Gastrocnemius medialis (tissue), 4 donors: ENCODE measurements at regions of chr6 and their contacts with region 1.

Region 1: GRCh38 chr6:149648148-149649145 is at the start of gene KATNA1:
- DNase-seq: peak; percentile 78 to 86
- ATAC-seq: peak; percentile 92
- H3K4me3 ChIP-seq: peak within 1 kb of the TSS; percentile 62 to 92 (median 86)
- H3K27ac ChIP-seq: peak within 1 kb of the TSS; percentile 87 to 95 (median 92)
- H3K4me1 ChIP-seq: peaks cover 15 to 18% of the 10 kb centered on the region in 2 donors
- H3K27me3 ChIP-seq: no peaks in the 10 kb centered on the region
- CTCF ChIP-seq: peak in 1 of 5 experiments; percentile 7
- POLR2A ChIP-seq: peak; percentile 89 to 93
- total RNA-seq, gene KATNA1: 16.0 to 29.3 (median 26.0) TPM

Region 2: DNA sequence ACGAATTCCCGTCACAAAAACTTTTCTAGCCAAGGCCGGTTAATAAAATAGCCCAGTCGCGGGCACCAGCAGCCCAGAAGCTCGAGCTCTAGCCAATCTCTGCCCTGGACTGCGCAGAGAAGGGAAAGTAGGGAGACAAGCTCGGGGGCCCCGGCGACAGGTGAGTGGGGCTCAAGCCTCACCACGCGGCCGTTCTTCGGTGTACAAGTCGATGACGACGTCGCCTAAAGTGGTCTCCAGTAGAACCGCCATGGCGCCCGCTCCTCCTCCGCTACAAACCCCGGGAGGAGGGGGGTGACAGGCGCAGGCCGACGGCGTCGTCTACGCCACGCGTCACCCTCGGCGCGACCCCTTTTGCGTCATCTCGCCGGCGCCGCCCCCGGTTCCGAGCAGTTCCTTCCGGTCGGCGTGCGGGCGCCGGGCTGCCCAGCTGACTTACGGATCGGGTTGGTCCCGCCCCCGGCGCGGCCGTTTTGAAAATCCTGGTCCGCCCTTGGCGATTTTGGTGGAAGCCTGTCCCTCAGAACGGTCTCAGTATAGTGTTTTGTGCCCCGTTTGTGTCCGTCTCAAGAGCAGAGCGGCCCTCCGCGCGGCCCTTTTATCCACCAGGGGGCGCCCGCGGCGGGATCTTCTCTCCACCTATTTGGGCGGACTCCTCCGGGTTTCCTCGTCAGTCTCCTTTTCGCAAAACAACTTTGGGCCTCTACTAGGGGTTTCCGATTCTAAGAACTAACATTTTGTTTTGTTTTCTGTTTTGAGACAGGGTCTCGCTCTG is 102.5 kb before region 1 on chr6 and contains the start of gene PPIL4:
- in situ Hi-C with region 1: no loop called
- intact Hi-C with region 1: loop called (anchors 2 kb)
- DNase-seq: peak; percentile 92 to 95
- ATAC-seq: peak; percentile 95 to 96
- H3K4me3 ChIP-seq: peak within 1 kb of the TSS; percentile 79 to 100 (median 97)
- H3K27ac ChIP-seq: peak within 1 kb of the TSS; percentile 87 to 100 (median 98)
- H3K4me1 ChIP-seq: peaks cover 22 to 31% of the 10 kb centered on the region in 2 donors
- H3K27me3 ChIP-seq: no peaks in the 10 kb centered on the region
- CTCF ChIP-seq: peak; percentile 78 to 90 (median 83)
- POLR2A ChIP-seq: peak; percentile 83 to 88
- total RNA-seq, gene PPIL4: 14.9 to 26.2 (median 18.5) TPM

Region 3: DNA sequence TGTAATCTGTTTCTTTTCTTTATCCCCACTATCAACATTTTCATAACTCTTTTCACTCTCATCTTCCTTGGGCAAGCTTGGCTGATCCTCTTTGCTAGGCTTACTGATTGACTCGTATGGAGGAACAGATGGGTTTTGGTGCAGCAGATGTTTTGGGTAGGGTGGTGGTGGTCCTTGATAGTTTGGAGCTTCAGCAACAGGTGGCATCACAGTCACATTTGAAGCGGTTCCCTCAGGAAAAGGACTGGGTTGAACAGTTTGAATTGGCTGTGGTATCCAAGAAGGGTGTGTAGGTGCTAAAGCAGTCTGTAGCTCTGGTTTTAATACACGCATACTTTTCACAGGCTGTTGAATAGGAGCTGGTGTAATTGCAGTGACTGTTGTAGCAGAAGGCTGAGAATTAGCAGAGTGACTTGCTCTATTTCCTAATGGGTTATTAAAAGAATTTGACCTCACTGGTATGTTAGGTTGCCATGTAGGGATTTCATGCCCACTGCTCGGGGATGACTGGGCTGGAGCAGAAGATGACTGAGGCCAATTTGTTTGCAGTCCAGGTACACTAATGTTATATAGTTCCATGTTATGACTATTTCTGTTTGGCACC is 34.9 kb after region 1 on chr6:
- in situ Hi-C with region 1: no loop called
- intact Hi-C with region 1: loop called (anchors 2 kb)
- DNase-seq: peak; percentile 6 to 66
- ATAC-seq: peak; percentile 95 to 99
- H3K4me3 ChIP-seq: no peak overlapping the region
- H3K27ac ChIP-seq: peak overlapping the region; percentile 77 to 84 (median 82)
- H3K4me1 ChIP-seq: peaks cover 31 to 40% of the 10 kb centered on the region in 2 donors
- H3K27me3 ChIP-seq: no peaks in the 10 kb centered on the region
- CTCF ChIP-seq: no peak
- POLR2A ChIP-seq: no peak

Region 4: DNA sequence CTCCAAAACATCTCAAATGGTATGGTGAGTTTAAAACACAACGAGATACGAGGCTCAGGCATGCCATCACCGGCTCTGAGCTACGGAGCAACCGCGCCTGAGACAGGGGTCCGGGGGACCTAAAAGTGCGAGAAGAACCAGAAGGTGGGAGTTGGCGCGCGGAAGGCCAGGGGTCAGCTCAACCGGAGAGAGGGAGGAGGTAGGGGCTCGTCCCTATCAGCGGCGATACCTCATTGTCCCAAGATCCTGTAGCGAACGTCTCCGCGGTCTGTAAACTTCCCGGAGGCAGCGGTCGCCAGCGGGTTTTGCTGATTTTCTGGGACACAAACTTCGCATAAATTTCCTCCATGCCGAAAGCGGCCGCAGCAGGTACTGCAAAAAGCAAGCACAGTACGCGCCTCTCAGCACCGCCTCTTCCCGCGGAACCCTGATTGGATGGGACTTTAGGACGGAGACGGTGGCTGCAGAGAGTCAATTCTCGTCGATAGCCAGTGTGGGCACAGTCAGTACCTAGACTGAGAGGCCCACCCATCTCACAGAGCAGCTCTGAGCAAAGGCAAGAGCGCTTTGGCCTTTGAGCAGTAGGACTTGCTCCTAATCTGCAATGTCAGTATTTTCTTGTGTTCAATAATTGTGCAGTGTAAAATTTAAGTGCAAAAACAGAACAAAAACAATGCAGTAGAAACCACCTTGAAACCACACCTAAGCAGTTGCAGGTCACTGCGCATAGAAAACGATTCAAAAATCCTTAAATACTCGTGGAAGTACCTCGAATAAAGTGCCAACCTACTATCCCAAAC is 97.9 kb after region 1 on chr6 and contains the start of gene NUP43:
- in situ Hi-C with region 1: no loop called
- intact Hi-C with region 1: loop called (anchors 2 kb)
- DNase-seq: peak; percentile 84 to 93
- ATAC-seq: peak; percentile 48 to 67
- H3K4me3 ChIP-seq: peak within 1 kb of the TSS; percentile 66 to 93 (median 72)
- H3K27ac ChIP-seq: peak within 1 kb of the TSS; percentile 74 to 86 (median 80)
- H3K4me1 ChIP-seq: peaks cover 16 to 24% of the 10 kb centered on the region in 2 donors
- H3K27me3 ChIP-seq: no peaks in the 10 kb centered on the region
- CTCF ChIP-seq: peak; percentile 70 to 82 (median 77)
- POLR2A ChIP-seq: peak in 1 of 2 donors; percentile 14
- total RNA-seq, gene NUP43: 15.0 to 42.0 (median 16.7) TPM

Region 5: DNA sequence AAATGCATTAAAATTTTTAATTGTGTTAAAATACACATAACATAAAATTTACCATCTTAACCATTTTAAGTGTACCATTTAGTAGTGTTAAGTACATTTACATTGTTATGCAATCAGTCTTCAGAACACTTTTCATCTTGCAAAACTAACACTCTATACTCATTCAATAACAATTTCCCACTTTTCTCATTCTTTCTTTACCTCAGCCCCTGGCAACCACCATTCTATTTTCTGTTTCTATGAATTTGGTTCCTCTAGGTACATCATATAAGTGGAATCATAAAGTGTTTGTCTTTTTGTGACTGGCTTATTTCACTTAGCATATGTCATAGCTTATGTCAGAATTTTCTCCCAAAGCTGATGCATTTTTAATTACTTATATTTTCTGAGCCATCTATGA is 133.3 kb after region 1 on chr6:
- in situ Hi-C with region 1: no loop called
- intact Hi-C with region 1: no loop called
- DNase-seq: no peak
- ATAC-seq: no peak
- H3K4me3 ChIP-seq: no peak overlapping the region
- H3K27ac ChIP-seq: no peak overlapping the region
- H3K4me1 ChIP-seq: no peaks in the 10 kb centered on the region
- H3K27me3 ChIP-seq: no peaks in the 10 kb centered on the region
- CTCF ChIP-seq: no peak
- POLR2A ChIP-seq: no peak

Region 6: GRCh38 chr6:151390276-151391032 is 1742.0 kb after region 1 on chr6:
- in situ Hi-C with region 1: no loop called
- intact Hi-C with region 1: loop called (anchors 5 kb)
- DNase-seq: peak; percentile 93 to 97
- ATAC-seq: peak; percentile 78 to 81
- H3K4me3 ChIP-seq: peak overlapping the region; percentile 81 to 96 (median 91)
- H3K27ac ChIP-seq: peak overlapping the region; percentile 94 to 100 (median 99)
- H3K4me1 ChIP-seq: peaks cover 48 to 53% of the 10 kb centered on the region in 2 donors
- H3K27me3 ChIP-seq: no peaks in the 10 kb centered on the region
- CTCF ChIP-seq: no peak
- POLR2A ChIP-seq: peak; percentile 51 to 60